ENCODE measurements at regions of chr19 and their contacts with region 1.

Region 1: GRCh38 chr19:57819475-57820148 is 4.9 kb upstream of the ZNF552 start:
- DNase-seq: peak; percentile 80
- H3K4me3 Mint-ChIP-seq: peak overlapping the region; percentile 95
- H3K27ac Mint-ChIP-seq: peak overlapping the region; percentile 99
- H3K4me1 Mint-ChIP-seq: peaks cover 39% of the 10 kb centered on the region
- H3K27me3 Mint-ChIP-seq: no peaks in the 10 kb centered on the region

Region 2: GRCh38 chr19:57769345-57770131 is 50.1 kb before region 1 on chr19 and contains the start of gene ZNF586:
- intact Hi-C with region 1: loop called (anchors 2 kb)
- DNase-seq: peak; percentile 82
- H3K4me3 Mint-ChIP-seq: peak within 1 kb of the TSS; percentile 89
- H3K27ac Mint-ChIP-seq: peak within 1 kb of the TSS; percentile 85
- H3K4me1 Mint-ChIP-seq: peaks cover 8% of the 10 kb centered on the region
- H3K27me3 Mint-ChIP-seq: no peaks in the 10 kb centered on the region
- total RNA-seq, gene ZNF586: 11.4 and 13.4 TPM in 2 replicates

Region 3: DNA sequence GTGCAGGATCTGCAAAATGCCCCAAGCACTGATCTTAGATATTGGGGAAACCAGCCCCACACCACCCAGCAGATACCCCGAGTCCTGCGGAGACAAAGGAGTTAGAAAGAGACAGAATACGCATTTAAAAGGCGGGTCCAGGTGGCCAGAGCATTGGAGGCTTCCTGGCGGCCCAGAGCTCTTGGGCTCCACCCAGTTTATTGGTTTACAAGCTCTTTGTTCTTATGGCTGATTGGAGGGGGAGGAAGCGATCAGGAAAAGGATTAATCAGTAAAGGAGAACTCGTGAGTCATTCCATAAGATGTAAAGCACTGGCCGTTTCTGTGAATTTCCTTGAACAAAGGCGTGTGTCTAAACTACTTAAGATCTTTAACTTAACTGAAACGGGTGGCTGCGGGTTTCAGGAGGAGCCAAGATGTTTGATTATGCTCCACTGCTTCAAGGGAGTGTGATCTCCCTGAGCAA is 31.0 kb after region 1 on chr19:
- intact Hi-C with region 1: loop called (anchors 5 kb)
- DNase-seq: no peak
- H3K4me3 Mint-ChIP-seq: peak overlapping the region; percentile 92
- H3K27ac Mint-ChIP-seq: peak overlapping the region; percentile 91
- H3K4me1 Mint-ChIP-seq: peaks cover 19% of the 10 kb centered on the region
- H3K27me3 Mint-ChIP-seq: no peaks in the 10 kb centered on the region

Measured in activated T-helper 2 cell treated with anti-CD3 and anti-CD28 coated beads, Interferon-gamma antibody, Interleukin-2, Interleukin-4, amounts not matched to agents 10 μg/mL and 5 μg/mL and 100 μg/mL, durations not matched to agents 14 hours and 24 hours and 36 hours (primary cell).